ENCODE measurements at regions of chr12 and their contacts with region 1.

Region 1: DNA sequence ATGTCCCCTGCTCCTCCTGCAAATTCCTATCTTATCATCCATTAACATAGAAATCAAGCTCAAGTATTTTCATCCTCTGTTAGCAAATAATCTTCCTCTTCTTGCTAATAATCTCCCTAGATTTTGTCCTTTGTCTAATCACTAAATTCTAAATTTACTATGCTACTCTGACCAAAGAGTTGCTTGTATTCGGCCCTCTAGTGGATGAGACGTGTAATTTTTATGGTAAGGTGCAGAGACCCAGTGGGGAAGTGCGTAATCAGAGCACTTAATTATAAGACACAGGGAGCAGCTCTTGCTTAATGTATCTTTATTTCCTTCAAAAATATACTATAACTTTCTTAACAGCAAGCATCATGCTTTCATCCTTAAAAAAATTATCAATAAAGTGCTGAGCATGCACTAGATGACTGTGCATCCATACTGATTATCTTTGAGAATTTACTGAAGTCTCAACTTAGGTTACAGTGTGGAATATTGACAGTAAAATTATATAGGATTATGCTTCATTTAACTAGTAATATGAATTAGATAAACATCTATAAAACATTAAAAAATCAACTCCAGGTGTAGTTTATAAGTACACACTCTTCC is 212.6 kb downstream of the SLC16A7 start:
- DNase-seq: peak; percentile 55
- ATAC-seq: peak; percentile 72; the same call in 1 of the 2 replicates
- H3K4me3 ChIP-seq: no peak overlapping the region
- H3K27ac ChIP-seq: no peak overlapping the region
- H3K4me1 ChIP-seq: peaks cover 4% of the 10 kb centered on the region; the same call in 1 of the 2 replicates
- H3K27me3 ChIP-seq: no peaks in the 10 kb centered on the region
- CTCF ChIP-seq: peak; percentile 88

Region 2: GRCh38 chr12:59403259-59403932 is 405.0 kb before region 1 on chr12:
- CTCF ChIA-PET with region 1: no interaction called
- POLR2A ChIA-PET with region 1: no interaction called
- intact Hi-C with region 1: loop called (anchors 2 kb)
- DNase-seq: peak; percentile 77
- ATAC-seq: peak; percentile 77
- H3K4me3 ChIP-seq: peak overlapping the region; percentile 41; the same call in 1 of the 2 replicates
- H3K27ac ChIP-seq: no peak overlapping the region
- H3K4me1 ChIP-seq: peaks cover 10% of the 10 kb centered on the region
- H3K27me3 ChIP-seq: no peaks in the 10 kb centered on the region
- CTCF ChIP-seq: peak; percentile 87

Region 3: DNA sequence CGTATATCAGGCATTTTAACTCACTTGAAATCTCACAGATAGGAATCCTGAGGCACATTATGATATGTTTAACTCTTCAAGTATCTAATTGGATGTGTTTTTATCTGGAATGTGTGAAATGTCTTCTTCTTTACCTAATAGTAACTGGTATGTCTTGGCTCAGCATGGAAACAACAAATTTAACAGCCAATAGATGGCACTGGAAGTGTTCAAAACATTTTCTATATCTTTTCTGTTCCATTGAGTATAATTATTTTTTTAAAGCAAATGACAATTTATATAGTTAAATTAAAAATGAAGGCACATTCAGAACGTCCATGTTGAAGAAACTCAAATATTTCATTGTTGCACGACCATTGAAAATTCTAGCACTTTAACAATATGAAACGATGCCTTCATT is 377.1 kb before region 1 on chr12:
- CTCF ChIA-PET with region 1: no interaction called
- POLR2A ChIA-PET with region 1: no interaction called
- intact Hi-C with region 1: loop called (anchors 1 kb)
- DNase-seq: peak; percentile 35
- ATAC-seq: peak; percentile 55
- H3K4me3 ChIP-seq: no peak overlapping the region
- H3K27ac ChIP-seq: no peak overlapping the region
- H3K4me1 ChIP-seq: no peaks in the 10 kb centered on the region
- H3K27me3 ChIP-seq: no peaks in the 10 kb centered on the region
- CTCF ChIP-seq: peak; percentile 58

Region 4: GRCh38 chr12:59699421-59700152 is 108.8 kb before region 1 on chr12:
- CTCF ChIA-PET with region 1: no interaction called
- POLR2A ChIA-PET with region 1: no interaction called
- intact Hi-C with region 1: no loop called
- DNase-seq: no peak
- ATAC-seq: no peak
- H3K4me3 ChIP-seq: no peak overlapping the region
- H3K27ac ChIP-seq: no peak overlapping the region
- H3K4me1 ChIP-seq: peaks cover 11% of the 10 kb centered on the region; the same call in 1 of the 2 replicates
- H3K27me3 ChIP-seq: no peaks in the 10 kb centered on the region
- CTCF ChIP-seq: no peak